ENCODE measurements at regions of chr2 and their contacts with region 1.

Region 1: DNA sequence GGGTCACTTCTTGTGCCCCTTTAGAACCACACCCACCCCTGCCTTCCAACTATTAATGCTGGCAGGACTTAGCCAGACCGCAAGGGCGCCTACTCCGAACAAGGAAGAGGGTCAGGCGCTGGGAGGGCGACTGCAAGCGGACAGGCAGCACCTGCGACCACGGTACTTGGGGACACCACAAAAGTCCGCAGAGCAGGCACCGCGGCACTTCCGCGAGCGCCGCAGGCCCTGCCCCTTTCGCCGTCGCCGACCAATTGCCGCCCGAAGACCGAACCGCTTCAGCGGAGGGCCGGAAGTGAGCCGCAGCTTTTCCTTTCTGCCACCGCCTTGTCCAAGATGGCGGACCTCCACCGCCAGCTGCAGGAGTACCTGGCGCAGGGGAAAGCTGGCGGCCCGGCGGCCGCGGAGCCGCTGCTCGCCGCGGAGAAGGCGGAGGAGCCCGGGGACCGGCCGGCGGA is at the start of gene SFT2D3:
- DNase-seq: peak; percentile 84 to 92 (median 89)
- ATAC-seq: peak; percentile 83
- H3K4me3 ChIP-seq: peak within 1 kb of the TSS; percentile 75
- H3K4me3 Mint-ChIP-seq: peak within 1 kb of the TSS; percentile 88 to 96 (median 94)
- H3K27ac ChIP-seq: peak within 1 kb of the TSS; percentile 83
- H3K27ac Mint-ChIP-seq: peak within 1 kb of the TSS; percentile 96 to 99 (median 98)
- H3K4me1 ChIP-seq: peaks cover 21 to 29% of the 10 kb centered on the region in 2 donors
- H3K4me1 Mint-ChIP-seq: peaks cover 18 to 52% (median 46%) of the 10 kb centered on the region in 7 donors
- H3K27me3 ChIP-seq: no peaks in the 10 kb centered on the region
- H3K27me3 Mint-ChIP-seq: peaks cover 0 to under 1% (median 0%) of the 10 kb centered on the region in 5 donors
- total RNA-seq, gene SFT2D3: 6.0 to 17.8 (median 8.9) TPM

Region 2: DNA sequence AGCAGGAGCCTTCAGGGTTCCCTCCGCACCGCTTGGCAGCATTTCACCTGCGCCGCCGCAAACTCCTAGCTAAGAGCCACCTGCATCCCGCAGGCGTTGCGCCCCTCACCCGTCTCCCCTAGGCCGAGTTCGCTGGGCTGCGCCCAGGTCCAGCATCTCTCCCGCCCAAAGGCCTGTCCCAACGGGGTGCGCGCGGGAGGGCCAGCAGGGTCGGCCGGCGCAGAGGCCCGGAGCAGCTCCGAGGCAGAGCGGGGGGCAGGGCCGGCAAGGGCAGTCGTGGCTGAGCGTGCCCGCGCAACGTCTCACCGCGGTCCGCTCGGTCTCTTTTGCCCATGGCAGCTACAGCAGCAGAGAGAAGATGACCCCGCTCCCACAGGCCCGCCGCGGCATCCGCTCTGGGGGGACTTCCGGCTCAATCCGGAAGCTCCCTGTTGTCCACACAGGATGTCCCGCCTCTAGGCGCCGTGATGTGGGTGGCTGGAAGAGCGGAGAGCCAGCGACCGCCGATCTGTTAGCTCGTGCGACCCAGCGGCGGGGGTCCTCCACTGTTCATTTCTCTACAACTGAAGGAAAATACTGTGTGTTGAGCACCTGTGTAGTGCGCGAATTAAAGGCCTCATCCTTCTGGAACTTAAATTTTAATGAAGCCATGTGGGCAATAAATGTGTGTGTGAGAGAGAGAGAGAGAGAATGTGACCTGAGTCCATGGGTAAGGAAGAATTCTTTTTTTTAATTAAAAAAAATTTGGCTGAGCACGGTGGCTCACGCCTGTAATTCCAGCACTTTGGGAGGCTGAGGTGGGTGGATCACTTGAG is 407.3 kb before region 1 on chr2 and contains the start of gene ERCC3:
- CTCF ChIA-PET with region 1: no interaction called
- POLR2A ChIA-PET with region 1: interaction called, 6 read pairs
- intact Hi-C with region 1: loop called in 1 of 2 experiments (anchors 10 kb)
- DNase-seq: peak; percentile 54 to 81 (median 72)
- ATAC-seq: peak; percentile 93
- H3K4me3 ChIP-seq: peak within 1 kb of the TSS; percentile 87
- H3K4me3 Mint-ChIP-seq: peak within 1 kb of the TSS; percentile 92 to 99 (median 98)
- H3K27ac ChIP-seq: peak within 1 kb of the TSS; percentile 86
- H3K27ac Mint-ChIP-seq: peak within 1 kb of the TSS; percentile 77 to 97 (median 95)
- H3K4me1 ChIP-seq: peaks cover 8 to 12% of the 10 kb centered on the region in 2 donors
- H3K4me1 Mint-ChIP-seq: peaks cover 18 to 49% (median 37%) of the 10 kb centered on the region in 7 donors
- H3K27me3 ChIP-seq: no peaks in the 10 kb centered on the region
- H3K27me3 Mint-ChIP-seq: no peaks in the 10 kb centered on the region
- total RNA-seq, gene ERCC3: 43.4 to 71.5 (median 56.8) TPM

Region 3: GRCh38 chr2:127498386-127498785 is 202.8 kb before region 1 on chr2:
- CTCF ChIA-PET with region 1: no interaction called
- POLR2A ChIA-PET with region 1: no interaction called
- intact Hi-C with region 1: no loop called
- DNase-seq: no peak
- ATAC-seq: no peak
- H3K4me3 ChIP-seq: no peak overlapping the region
- H3K4me3 Mint-ChIP-seq: no peak overlapping the region
- H3K27ac ChIP-seq: no peak overlapping the region
- H3K27ac Mint-ChIP-seq: peak overlapping the region in 7 of 9 donors; percentile 1 to 62 (median 39)
- H3K4me1 ChIP-seq: no peaks in the 10 kb centered on the region
- H3K4me1 Mint-ChIP-seq: peaks cover 0 to 15% (median 3%) of the 10 kb centered on the region in 7 donors
- H3K27me3 ChIP-seq: no peaks in the 10 kb centered on the region
- H3K27me3 Mint-ChIP-seq: no peaks in the 10 kb centered on the region

Region 4: GRCh38 chr2:127576433-127577207 is 124.6 kb before region 1 on chr2:
- CTCF ChIA-PET with region 1: no interaction called
- POLR2A ChIA-PET with region 1: no interaction called
- intact Hi-C with region 1: no loop called
- DNase-seq: peak in 1 of 9 donors; percentile 14
- ATAC-seq: no peak
- H3K4me3 ChIP-seq: no peak overlapping the region
- H3K4me3 Mint-ChIP-seq: no peak overlapping the region
- H3K27ac ChIP-seq: no peak overlapping the region
- H3K27ac Mint-ChIP-seq: peak overlapping the region in 6 of 9 donors; percentile 62 to 84 (median 71)
- H3K4me1 ChIP-seq: peaks cover 0 to 6% of the 10 kb centered on the region in 2 donors
- H3K4me1 Mint-ChIP-seq: peaks cover 13 to 25% (median 19%) of the 10 kb centered on the region in 7 donors
- H3K27me3 ChIP-seq: no peaks in the 10 kb centered on the region
- H3K27me3 Mint-ChIP-seq: peaks cover 0 to 12% (median 0%) of the 10 kb centered on the region in 5 donors

Region 5: GRCh38 chr2:127591221-127591923 is 109.8 kb before region 1 on chr2:
- CTCF ChIA-PET with region 1: interaction called, 6 read pairs
- POLR2A ChIA-PET with region 1: interaction called, 12 read pairs
- intact Hi-C with region 1: loop called (anchors 1 to 5 kb)
- DNase-seq: peak; percentile 42 to 79 (median 67)
- ATAC-seq: peak; percentile 92
- H3K4me3 ChIP-seq: no peak overlapping the region
- H3K4me3 Mint-ChIP-seq: no peak overlapping the region
- H3K27ac ChIP-seq: no peak overlapping the region
- H3K27ac Mint-ChIP-seq: peak overlapping the region in 5 of 9 donors; percentile 18 to 69 (median 36)
- H3K4me1 ChIP-seq: no peaks in the 10 kb centered on the region
- H3K4me1 Mint-ChIP-seq: peaks cover 0 to 17% (median 4%) of the 10 kb centered on the region in 7 donors
- H3K27me3 ChIP-seq: no peaks in the 10 kb centered on the region
- H3K27me3 Mint-ChIP-seq: no peaks in the 10 kb centered on the region

Region 6: GRCh38 chr2:127829845-127830246 is 128.6 kb after region 1 on chr2:
- CTCF ChIA-PET with region 1: no interaction called
- POLR2A ChIA-PET with region 1: interaction called, 8 read pairs
- intact Hi-C with region 1: loop called in 1 of 2 experiments (anchors 5 kb)
- DNase-seq: peak in 8 of 9 donors; percentile 46 to 76 (median 66)
- ATAC-seq: peak; percentile 96
- H3K4me3 ChIP-seq: no peak overlapping the region
- H3K4me3 Mint-ChIP-seq: peak overlapping the region; percentile 3 to 60 (median 50)
- H3K27ac ChIP-seq: peak overlapping the region; percentile 65
- H3K27ac Mint-ChIP-seq: peak overlapping the region; percentile 46 to 92 (median 73)
- H3K4me1 ChIP-seq: peaks cover 18 to 22% of the 10 kb centered on the region in 2 donors
- H3K4me1 Mint-ChIP-seq: peaks cover 14 to 29% (median 24%) of the 10 kb centered on the region in 7 donors
- H3K27me3 ChIP-seq: no peaks in the 10 kb centered on the region
- H3K27me3 Mint-ChIP-seq: no peaks in the 10 kb centered on the region

Region 7: DNA sequence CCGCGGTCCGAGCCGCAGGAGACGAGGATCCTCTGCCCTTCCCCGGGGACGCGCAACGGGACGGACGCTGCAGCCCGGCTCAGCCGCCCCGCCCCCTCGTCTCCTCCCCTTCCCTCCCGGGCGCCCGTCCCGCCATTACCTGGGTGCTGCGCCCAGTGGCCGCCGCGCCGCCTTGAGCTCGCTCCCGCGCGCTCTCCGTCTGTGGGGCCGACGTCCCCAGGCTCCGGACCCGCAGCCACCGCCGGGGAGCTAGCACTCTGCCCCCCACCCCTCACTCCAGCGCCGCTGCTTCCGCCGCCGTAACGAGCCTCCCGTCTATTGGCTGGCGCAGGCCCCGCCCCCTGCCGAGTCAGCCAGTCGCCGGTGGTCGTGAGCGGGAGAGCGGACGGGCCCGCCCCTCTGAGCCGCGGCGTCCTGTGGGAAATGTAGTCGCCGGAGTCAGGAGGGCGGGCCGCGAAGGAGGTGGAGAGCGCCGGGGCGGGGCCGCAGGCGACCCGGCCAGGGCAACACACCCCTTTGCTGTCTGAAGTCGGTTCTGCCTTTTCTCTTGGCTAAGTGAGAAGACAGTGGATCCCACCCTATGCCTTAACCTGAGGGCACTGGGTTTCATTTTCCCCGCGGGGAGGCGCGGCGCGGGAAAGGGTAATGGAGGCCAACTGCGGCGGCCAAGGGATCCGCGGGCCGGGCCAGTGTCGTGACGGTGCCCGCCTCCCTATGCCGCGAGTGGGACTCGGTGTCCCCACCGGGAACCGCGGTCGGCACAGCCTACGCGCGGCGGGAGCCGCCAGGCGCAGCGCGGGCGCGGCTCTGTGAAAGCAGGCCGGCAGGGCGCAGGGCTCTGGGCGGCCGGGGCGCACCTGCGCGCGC is 326.8 kb after region 1 on chr2 and contains the start of gene SAP130:
- CTCF ChIA-PET with region 1: no interaction called
- POLR2A ChIA-PET with region 1: interaction called, 3 read pairs
- intact Hi-C with region 1: loop called (anchors 1 kb)
- DNase-seq: peak; percentile 96 to 99 (median 98)
- ATAC-seq: peak; percentile 86
- H3K4me3 ChIP-seq: peak within 1 kb of the TSS; percentile 86
- H3K4me3 Mint-ChIP-seq: peak within 1 kb of the TSS; percentile 87 to 98 (median 98)
- H3K27ac ChIP-seq: peak within 1 kb of the TSS; percentile 91
- H3K27ac Mint-ChIP-seq: peak within 1 kb of the TSS; percentile 52 to 97 (median 93)
- H3K4me1 ChIP-seq: peaks cover 0 to 14% of the 10 kb centered on the region in 2 donors
- H3K4me1 Mint-ChIP-seq: peaks cover 14 to 32% (median 28%) of the 10 kb centered on the region in 7 donors
- H3K27me3 ChIP-seq: no peaks in the 10 kb centered on the region
- H3K27me3 Mint-ChIP-seq: peaks cover 0 to 16% (median 0%) of the 10 kb centered on the region in 5 donors
- total RNA-seq, gene SAP130: 29.9 to 38.0 (median 30.9) TPM